T-cell (primary cell): ENCODE measurements at regions of chr16 and their contacts with region 1.

Region 1: DNA sequence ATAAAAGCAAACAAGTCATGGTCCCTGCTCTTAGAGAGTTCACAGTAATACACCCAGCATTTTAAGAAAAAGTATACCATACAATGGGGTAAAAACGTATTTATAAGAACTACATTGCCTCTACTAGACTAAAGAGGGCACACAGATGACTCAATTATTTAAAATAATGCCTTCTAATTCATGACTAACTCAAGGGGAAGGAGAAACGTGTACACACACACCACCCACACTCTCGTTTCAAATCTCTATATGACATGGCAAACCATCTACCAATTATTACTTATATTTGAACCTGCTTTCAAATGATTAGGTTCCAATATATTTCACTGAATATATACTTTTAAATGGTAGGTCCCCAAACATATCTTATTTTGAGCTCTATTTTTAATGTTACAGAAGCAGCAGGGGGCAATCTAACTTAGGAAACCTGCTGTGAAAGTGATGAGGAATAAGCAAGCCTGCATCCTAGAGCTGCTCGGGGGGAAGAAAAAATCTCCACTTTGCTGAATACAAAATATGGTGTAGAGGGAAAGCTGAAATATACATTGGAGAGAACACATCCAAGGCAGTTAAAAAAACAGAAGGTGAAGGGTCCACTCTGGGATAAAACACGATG is 232.4 kb upstream of the PSMD7 start:
- DNase-seq: no peak
- ATAC-seq: no peak
- H3K4me3 ChIP-seq: no peak overlapping the region
- H3K4me3 Mint-ChIP-seq: no peak overlapping the region
- H3K27ac ChIP-seq: no peak overlapping the region
- H3K27ac Mint-ChIP-seq: no peak overlapping the region
- H3K4me1 ChIP-seq: no peaks in the 10 kb centered on the region
- H3K4me1 Mint-ChIP-seq: no peaks in the 10 kb centered on the region
- H3K27me3 ChIP-seq: no peaks in the 10 kb centered on the region
- H3K27me3 Mint-ChIP-seq: peaks cover 0 to 9% of the 10 kb centered on the region in 2 donors

Region 2: DNA sequence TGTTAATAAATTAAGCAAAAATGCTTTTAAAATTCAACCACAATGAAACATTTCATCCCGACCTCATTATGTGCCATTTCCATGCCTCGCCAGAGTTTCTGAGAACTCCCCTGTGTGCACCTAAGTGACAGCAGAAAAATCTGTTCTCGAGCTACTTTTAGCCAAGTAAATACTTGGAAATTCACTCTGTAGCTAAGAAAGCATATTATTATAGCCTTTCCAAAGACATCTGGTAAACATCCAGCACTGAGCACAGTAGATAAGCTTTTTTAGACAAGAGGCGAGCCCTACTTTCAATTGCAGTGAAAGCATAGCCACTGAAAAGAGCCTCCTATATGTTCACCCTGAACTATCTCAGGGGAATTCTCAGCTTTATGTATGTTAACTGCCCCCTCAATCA is 10.4 kb before region 1 on chr16:
- CTCF ChIA-PET with region 1: interaction called in 1 of 2 experiments, 11 read pairs
- POLR2A ChIA-PET with region 1: no interaction called
- DNase-seq: no peak
- ATAC-seq: no peak
- H3K4me3 ChIP-seq: no peak overlapping the region
- H3K4me3 Mint-ChIP-seq: no peak overlapping the region
- H3K27ac ChIP-seq: no peak overlapping the region
- H3K27ac Mint-ChIP-seq: no peak overlapping the region
- H3K4me1 ChIP-seq: no peaks in the 10 kb centered on the region
- H3K4me1 Mint-ChIP-seq: no peaks in the 10 kb centered on the region
- H3K27me3 ChIP-seq: peaks cover 0 to 3% of the 10 kb centered on the region in 2 experiments
- H3K27me3 Mint-ChIP-seq: peaks cover 0 to 5% of the 10 kb centered on the region in 2 donors